Heart right ventricle (tissue), 16 donors: ENCODE measurements at regions of chrX and their contacts with region 1.

Region 1: DNA sequence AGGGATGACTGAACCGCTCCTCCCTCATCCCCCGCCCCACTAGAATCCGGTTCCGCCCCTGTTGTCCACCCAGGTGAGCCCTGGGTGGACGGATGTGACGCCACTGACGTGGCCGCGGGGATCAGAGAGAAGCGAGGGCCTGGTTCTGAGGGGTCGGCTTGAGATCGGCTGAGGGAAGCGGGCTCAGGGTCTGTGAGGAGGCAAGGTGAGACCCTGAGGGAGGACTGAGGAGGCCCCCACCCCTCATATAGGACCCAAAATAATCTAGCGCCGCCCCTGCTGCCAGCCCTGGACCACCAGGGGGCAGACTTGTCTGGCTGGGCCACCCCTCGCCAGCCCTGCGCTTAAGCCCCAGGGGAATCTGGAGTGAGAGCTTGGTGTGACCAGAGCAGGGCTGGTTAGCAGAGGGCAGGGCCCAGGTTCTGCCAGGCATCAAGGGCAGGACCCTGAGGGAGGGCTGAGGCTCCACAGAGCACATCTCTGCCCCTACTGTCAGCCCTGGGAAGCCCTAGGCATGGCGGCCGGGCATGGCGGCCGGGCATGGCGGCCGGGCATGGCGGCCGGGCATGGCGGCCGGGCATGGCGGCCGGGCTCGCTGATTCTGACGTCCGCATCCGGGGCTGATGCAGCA is at the start of gene MAGEA8:
- DNase-seq: no peak
- ATAC-seq: no peak
- H3K4me3 ChIP-seq: no peak within 1 kb of the TSS
- H3K27ac ChIP-seq: no peak within 1 kb of the TSS
- H3K4me1 ChIP-seq: no peaks in the 10 kb centered on the region
- H3K27me3 ChIP-seq: peaks cover 0 to 3% (median 0%) of the 10 kb centered on the region in 7 donors
- CTCF ChIP-seq: peak in 1 of 9 donors; percentile 22
- total RNA-seq, gene MAGEA8: not detected

Region 2: DNA sequence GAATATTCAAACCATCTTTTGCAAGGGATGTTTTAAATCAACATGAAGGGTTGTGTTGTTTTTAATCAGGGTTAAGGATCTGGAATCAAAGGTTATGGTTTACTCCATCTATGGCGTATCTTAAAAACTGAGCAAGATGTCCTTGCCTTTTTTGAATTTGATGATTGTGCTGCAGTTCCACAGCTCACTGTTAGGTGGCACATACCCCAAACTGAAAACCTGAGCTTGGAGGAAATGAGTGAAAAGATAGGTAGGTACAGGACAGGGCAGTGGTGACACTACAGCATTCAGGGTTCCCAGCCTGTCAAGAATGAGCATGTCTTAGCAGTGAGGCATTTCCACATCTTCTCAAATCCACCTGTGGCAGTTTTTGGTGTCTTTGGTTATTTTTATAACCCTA is 353.5 kb before region 1 on chrX:
- intact Hi-C with region 1: loop called in 1 of 10 experiments (anchors 10 kb)
- DNase-seq: no peak
- ATAC-seq: peak in 3 of 8 donors; percentile 27 to 38 (median 29)
- H3K4me3 ChIP-seq: no peak overlapping the region
- H3K27ac ChIP-seq: no peak overlapping the region
- H3K4me1 ChIP-seq: peaks cover 0 to 15% (median 0%) of the 10 kb centered on the region in 9 donors
- H3K27me3 ChIP-seq: peaks cover 0 to 6% (median 0%) of the 10 kb centered on the region in 7 donors
- CTCF ChIP-seq: peak in 7 of 9 donors; percentile 39 to 57 (median 49)

Region 3: GRCh38 chrX:149903889-149904748 is 22.9 kb after region 1 on chrX:
- intact Hi-C with region 1: no loop called
- DNase-seq: no peak
- ATAC-seq: no peak
- H3K4me3 ChIP-seq: peak overlapping the region in 3 of 10 donors; percentile 9 to 13 (median 11)
- H3K27ac ChIP-seq: no peak overlapping the region
- H3K4me1 ChIP-seq: no peaks in the 10 kb centered on the region
- H3K27me3 ChIP-seq: no peaks in the 10 kb centered on the region
- CTCF ChIP-seq: peak in 2 of 9 donors; percentile 12 to 15

Region 4: GRCh38 chrX:149938427-149939270 is 57.5 kb after region 1 on chrX and contains the start of gene EOLA2:
- intact Hi-C with region 1: no loop called
- DNase-seq: peak; percentile 92 to 94
- ATAC-seq: peak; percentile 59 to 76 (median 69)
- H3K4me3 ChIP-seq: peak within 1 kb of the TSS; percentile 44 to 85 (median 76)
- H3K27ac ChIP-seq: peak within 1 kb of the TSS; percentile 78 to 98 (median 90)
- H3K4me1 ChIP-seq: peaks cover 0 to 8% (median 4%) of the 10 kb centered on the region in 9 donors
- H3K27me3 ChIP-seq: no peaks in the 10 kb centered on the region
- CTCF ChIP-seq: peak; percentile 12 to 75 (median 66)
- total RNA-seq, gene EOLA2: 19.0 to 28.2 (median 23.9) TPM